B cell (primary cell): ENCODE measurements at regions of chr19 and their contacts with region 1.

Region 1: DNA sequence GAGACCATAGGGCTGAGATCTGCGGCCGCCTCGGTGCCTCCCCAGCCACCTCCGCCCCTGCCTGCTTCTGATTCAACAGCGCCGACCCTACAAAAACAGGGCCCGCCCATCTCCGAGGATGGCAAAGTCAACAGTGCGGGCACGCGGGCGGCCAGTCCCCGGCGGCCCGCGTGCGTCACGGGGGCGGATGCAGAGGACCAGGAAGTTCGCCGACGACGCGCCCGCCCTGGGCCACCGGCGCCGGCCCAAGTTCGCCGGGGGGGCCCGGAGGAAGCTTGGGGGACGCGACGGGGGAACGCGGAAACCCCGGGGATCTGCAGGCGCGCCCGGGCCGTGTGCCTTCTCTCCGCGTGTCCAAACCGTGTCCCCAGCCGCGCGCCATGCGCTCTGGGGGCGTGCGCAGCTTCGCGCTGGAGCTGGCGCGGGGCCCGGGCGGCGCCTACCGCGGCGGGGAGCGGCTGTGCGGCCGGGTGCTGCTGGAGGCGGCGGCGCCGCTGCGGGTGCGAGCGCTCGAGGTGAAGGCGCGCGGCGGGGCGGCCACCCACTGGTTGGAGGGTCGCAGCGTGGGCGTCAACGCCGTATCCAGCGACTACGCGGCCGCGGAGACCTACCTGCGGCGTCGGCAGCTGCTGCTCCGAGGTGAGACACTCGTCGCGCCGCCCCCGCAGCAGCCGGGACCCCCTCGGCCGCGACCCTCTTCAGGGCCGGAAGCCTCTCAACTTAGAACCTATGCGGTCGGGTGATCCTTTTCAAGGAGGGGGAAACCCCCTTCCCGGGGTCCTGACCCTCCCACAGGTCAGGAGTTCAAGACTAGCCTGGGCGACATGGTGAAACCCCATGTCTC is 6.8 kb upstream of the ARRDC2 start:
- DNase-seq: peak; percentile 99
- ATAC-seq: peak; percentile 86
- H3K4me3 ChIP-seq: peak overlapping the region; percentile 66 to 94 (median 89)
- H3K4me3 Mint-ChIP-seq: peak overlapping the region; percentile 95
- H3K27ac ChIP-seq: peak overlapping the region; percentile 97 to 99
- H3K27ac Mint-ChIP-seq: peak overlapping the region; percentile 98
- H3K4me1 ChIP-seq: peaks cover 22 to 39% of the 10 kb centered on the region in 2 donors
- H3K4me1 Mint-ChIP-seq: peaks cover 32% of the 10 kb centered on the region
- H3K27me3 ChIP-seq: no peaks in the 10 kb centered on the region
- H3K27me3 Mint-ChIP-seq: no peaks in the 10 kb centered on the region
- CTCF ChIP-seq: no peak

Region 2: DNA sequence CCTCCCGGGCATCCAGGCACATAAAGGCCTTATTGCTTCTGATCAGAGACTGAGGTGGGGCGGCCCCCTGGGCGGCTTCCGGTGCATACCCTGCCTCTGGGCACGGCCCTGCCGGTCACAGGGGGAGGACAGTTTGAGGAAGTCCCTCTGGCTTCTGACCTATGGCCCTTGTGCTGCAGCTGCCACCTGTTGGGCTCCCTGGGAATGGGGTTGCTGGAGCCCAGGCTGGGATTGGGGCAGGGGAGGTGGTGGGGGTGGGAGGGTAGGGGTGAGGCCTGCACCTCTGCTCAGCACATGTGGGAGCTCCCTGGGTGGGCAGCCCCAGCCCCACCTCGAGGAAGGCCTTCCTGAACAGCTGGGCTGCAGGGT is 677.2 kb before region 1 on chr19:
- CTCF ChIA-PET with region 1: no interaction called
- POLR2A ChIA-PET with region 1: no interaction called
- intact Hi-C with region 1: no loop called
- DNase-seq: peak; percentile 35
- ATAC-seq: no peak
- H3K4me3 ChIP-seq: peak overlapping the region in 1 of 5 experiments; percentile 15
- H3K4me3 Mint-ChIP-seq: no peak overlapping the region
- H3K27ac ChIP-seq: no peak overlapping the region
- H3K27ac Mint-ChIP-seq: no peak overlapping the region
- H3K4me1 ChIP-seq: peaks cover 2 to 8% of the 10 kb centered on the region in 2 donors
- H3K4me1 Mint-ChIP-seq: peaks cover 4% of the 10 kb centered on the region
- H3K27me3 ChIP-seq: no peaks in the 10 kb centered on the region
- H3K27me3 Mint-ChIP-seq: no peaks in the 10 kb centered on the region
- CTCF ChIP-seq: no peak

Region 3: GRCh38 chr19:17932485-17933338 is 68.4 kb before region 1 on chr19 and contains the start of gene CCDC124:
- CTCF ChIA-PET with region 1: interaction called, 346 read pairs
- POLR2A ChIA-PET with region 1: interaction called, 13 read pairs
- intact Hi-C with region 1: loop called (anchors 2 kb)
- DNase-seq: peak; percentile 97
- ATAC-seq: peak; percentile 95
- H3K4me3 ChIP-seq: peak within 1 kb of the TSS; percentile 72 to 88 (median 79)
- H3K4me3 Mint-ChIP-seq: peak within 1 kb of the TSS; percentile 96
- H3K27ac ChIP-seq: peak within 1 kb of the TSS; percentile 93 to 96
- H3K27ac Mint-ChIP-seq: peak within 1 kb of the TSS; percentile 97
- H3K4me1 ChIP-seq: peaks cover 11 to 19% of the 10 kb centered on the region in 2 donors
- H3K4me1 Mint-ChIP-seq: peaks cover 22% of the 10 kb centered on the region
- H3K27me3 ChIP-seq: no peaks in the 10 kb centered on the region
- H3K27me3 Mint-ChIP-seq: no peaks in the 10 kb centered on the region
- CTCF ChIP-seq: peak; percentile 90
- total RNA-seq, gene CCDC124: 25.0 and 26.9 TPM in 2 replicates

Region 4: DNA sequence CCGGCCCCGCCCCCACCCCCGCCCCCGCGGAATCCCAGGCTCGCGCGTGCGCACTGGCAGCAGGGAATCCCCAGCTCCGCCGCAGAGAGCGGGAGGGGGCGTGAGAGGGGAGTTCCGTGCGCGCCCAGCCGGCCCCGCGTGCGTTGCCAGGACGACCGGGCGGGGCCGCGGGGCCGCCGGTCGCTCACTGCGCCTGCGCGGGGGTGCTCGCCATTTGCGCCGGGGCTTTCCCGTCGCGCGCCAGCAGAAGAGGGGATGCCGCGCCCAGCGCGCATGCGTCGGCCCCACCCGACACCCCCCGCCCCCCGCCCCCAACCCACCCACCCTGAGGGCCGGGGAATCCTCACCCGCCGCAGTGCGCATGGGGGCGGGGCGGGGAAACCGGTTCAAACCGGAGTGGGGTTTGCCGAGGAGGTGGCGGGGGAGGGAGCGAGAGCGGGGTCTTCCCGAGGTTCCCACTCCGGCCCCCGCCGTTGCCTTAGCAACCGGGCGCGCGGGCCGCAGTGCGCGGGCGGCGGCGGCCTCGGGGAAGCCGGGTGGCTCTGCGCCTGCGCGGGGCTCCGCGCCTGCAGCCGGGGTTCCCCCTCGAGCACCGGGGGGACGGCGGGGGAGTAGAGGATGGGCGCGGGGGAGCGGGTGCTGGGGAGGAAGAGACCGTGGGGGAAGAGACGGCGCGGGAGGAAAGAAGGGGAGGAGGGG is 53.2 kb before region 1 on chr19:
- CTCF ChIA-PET with region 1: interaction called, 117 read pairs
- POLR2A ChIA-PET with region 1: interaction called, 7 read pairs
- intact Hi-C with region 1: loop called (anchors 1 kb)
- DNase-seq: peak; percentile 97
- ATAC-seq: peak; percentile 64
- H3K4me3 ChIP-seq: peak overlapping the region in 4 of 5 experiments; percentile 46 to 63 (median 58)
- H3K4me3 Mint-ChIP-seq: peak overlapping the region; percentile 88
- H3K27ac ChIP-seq: peak overlapping the region; percentile 55 to 94
- H3K27ac Mint-ChIP-seq: peak overlapping the region; percentile 56
- H3K4me1 ChIP-seq: peaks cover 53 to 61% of the 10 kb centered on the region in 2 donors
- H3K4me1 Mint-ChIP-seq: peaks cover 53% of the 10 kb centered on the region
- H3K27me3 ChIP-seq: peaks cover 0 to 40% (median 27%) of the 10 kb centered on the region in 4 experiments
- H3K27me3 Mint-ChIP-seq: peaks cover 15% of the 10 kb centered on the region
- CTCF ChIP-seq: no peak

Region 5: DNA sequence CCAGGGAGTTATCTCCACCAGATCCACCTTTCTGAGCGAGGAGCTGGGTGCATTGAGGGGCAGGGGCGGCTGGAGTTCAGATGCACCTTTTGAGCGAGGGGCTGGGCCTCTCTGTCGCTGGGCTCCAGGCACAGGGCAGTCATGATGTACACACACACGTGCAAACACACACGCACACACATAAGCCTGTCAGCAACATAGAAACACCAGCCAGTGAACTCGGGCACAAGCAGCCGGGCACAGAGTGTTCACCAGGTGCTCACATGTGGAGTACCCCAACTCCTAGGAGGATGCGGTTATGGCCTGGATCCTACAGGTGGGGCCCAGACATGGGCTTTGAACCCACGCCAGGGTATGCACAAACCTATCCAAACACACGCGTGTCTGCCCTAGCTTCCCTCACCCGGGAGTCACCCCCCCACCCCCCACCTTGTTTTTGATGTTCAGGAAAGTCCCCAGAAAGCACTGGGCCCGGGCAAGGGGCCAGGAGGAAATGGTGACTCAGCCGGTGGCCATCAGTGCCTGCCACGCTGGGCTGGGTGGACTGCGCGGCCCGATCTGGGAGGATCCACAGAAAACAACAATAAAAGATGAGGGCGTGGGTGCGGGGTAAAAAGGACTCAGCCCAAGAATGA is 20.1 kb after region 1 on chr19:
- CTCF ChIA-PET with region 1: interaction called, 6 read pairs
- POLR2A ChIA-PET with region 1: interaction called, 137 read pairs
- intact Hi-C with region 1: no loop called
- DNase-seq: peak; percentile 84
- ATAC-seq: peak; percentile 22
- H3K4me3 ChIP-seq: peak overlapping the region in 2 of 5 experiments; percentile 18 to 35
- H3K4me3 Mint-ChIP-seq: peak overlapping the region; percentile 79
- H3K27ac ChIP-seq: peak overlapping the region; percentile 95 to 99
- H3K27ac Mint-ChIP-seq: peak overlapping the region; percentile 98
- H3K4me1 ChIP-seq: peaks cover 51 to 64% of the 10 kb centered on the region in 2 donors
- H3K4me1 Mint-ChIP-seq: peaks cover 68% of the 10 kb centered on the region
- H3K27me3 ChIP-seq: no peaks in the 10 kb centered on the region
- H3K27me3 Mint-ChIP-seq: no peaks in the 10 kb centered on the region
- CTCF ChIP-seq: no peak

Region 6: GRCh38 chr19:18135712-18136584 is 134.8 kb after region 1 on chr19:
- CTCF ChIA-PET with region 1: no interaction called
- POLR2A ChIA-PET with region 1: no interaction called
- intact Hi-C with region 1: no loop called
- DNase-seq: no peak
- ATAC-seq: no peak
- H3K4me3 ChIP-seq: no peak overlapping the region
- H3K4me3 Mint-ChIP-seq: no peak overlapping the region
- H3K27ac ChIP-seq: no peak overlapping the region
- H3K27ac Mint-ChIP-seq: no peak overlapping the region
- H3K4me1 ChIP-seq: no peaks in the 10 kb centered on the region
- H3K4me1 Mint-ChIP-seq: no peaks in the 10 kb centered on the region
- H3K27me3 ChIP-seq: no peaks in the 10 kb centered on the region
- H3K27me3 Mint-ChIP-seq: no peaks in the 10 kb centered on the region
- CTCF ChIP-seq: no peak

Region 7: GRCh38 chr19:18152444-18152816 is 151.3 kb after region 1 on chr19:
- CTCF ChIA-PET with region 1: interaction called, 11 read pairs
- POLR2A ChIA-PET with region 1: interaction called, 3 read pairs
- intact Hi-C with region 1: loop called (anchors 1 kb)
- DNase-seq: peak; percentile 100
- ATAC-seq: peak; percentile 71
- H3K4me3 ChIP-seq: peak overlapping the region; percentile 63 to 88 (median 70)
- H3K4me3 Mint-ChIP-seq: peak overlapping the region; percentile 89
- H3K27ac ChIP-seq: peak overlapping the region; percentile 90 to 93
- H3K27ac Mint-ChIP-seq: peak overlapping the region; percentile 95
- H3K4me1 ChIP-seq: peaks cover 14 to 25% of the 10 kb centered on the region in 2 donors
- H3K4me1 Mint-ChIP-seq: peaks cover 23% of the 10 kb centered on the region
- H3K27me3 ChIP-seq: no peaks in the 10 kb centered on the region
- H3K27me3 Mint-ChIP-seq: no peaks in the 10 kb centered on the region
- CTCF ChIP-seq: peak; percentile 88